Activated CD8-positive, alpha-beta memory T cell treated with anti-CD3 and anti-CD28 coated beads, Interleukin-2, amount 10 ng/mL, durations not matched to agents 7 days and 5 days (primary cell): ENCODE measurements at regions of chr4 and their contacts with region 1.

Region 1: GRCh38 chr4:75673027-75673958 is at the start of gene G3BP2:
- DNase-seq: peak; percentile 99
- ATAC-seq: peak; percentile 96
- H3K4me3 Mint-ChIP-seq: peak within 1 kb of the TSS; percentile 96
- H3K27ac Mint-ChIP-seq: peak within 1 kb of the TSS; percentile 96
- H3K4me1 Mint-ChIP-seq: peaks cover 41% of the 10 kb centered on the region
- H3K27me3 Mint-ChIP-seq: no peaks in the 10 kb centered on the region
- total RNA-seq, gene G3BP2: 148 to 230 TPM

Region 2: GRCh38 chr4:75653845-75654503 is 19.3 kb before region 1 on chr4:
- CTCF ChIA-PET with region 1: interaction called, 13 read pairs
- DNase-seq: no peak
- ATAC-seq: peak; percentile 16
- H3K4me3 Mint-ChIP-seq: peak overlapping the region; percentile 52
- H3K27ac Mint-ChIP-seq: peak overlapping the region; percentile 94
- H3K4me1 Mint-ChIP-seq: peaks cover 63% of the 10 kb centered on the region
- H3K27me3 Mint-ChIP-seq: no peaks in the 10 kb centered on the region

Region 3: GRCh38 chr4:75708218-75708691 is 35.0 kb after region 1 on chr4:
- CTCF ChIA-PET with region 1: interaction called, 14 read pairs
- DNase-seq: peak; percentile 62
- ATAC-seq: peak; percentile 89
- H3K4me3 Mint-ChIP-seq: no peak overlapping the region
- H3K27ac Mint-ChIP-seq: no peak overlapping the region
- H3K4me1 Mint-ChIP-seq: peaks cover 11% of the 10 kb centered on the region
- H3K27me3 Mint-ChIP-seq: no peaks in the 10 kb centered on the region

Region 4: DNA sequence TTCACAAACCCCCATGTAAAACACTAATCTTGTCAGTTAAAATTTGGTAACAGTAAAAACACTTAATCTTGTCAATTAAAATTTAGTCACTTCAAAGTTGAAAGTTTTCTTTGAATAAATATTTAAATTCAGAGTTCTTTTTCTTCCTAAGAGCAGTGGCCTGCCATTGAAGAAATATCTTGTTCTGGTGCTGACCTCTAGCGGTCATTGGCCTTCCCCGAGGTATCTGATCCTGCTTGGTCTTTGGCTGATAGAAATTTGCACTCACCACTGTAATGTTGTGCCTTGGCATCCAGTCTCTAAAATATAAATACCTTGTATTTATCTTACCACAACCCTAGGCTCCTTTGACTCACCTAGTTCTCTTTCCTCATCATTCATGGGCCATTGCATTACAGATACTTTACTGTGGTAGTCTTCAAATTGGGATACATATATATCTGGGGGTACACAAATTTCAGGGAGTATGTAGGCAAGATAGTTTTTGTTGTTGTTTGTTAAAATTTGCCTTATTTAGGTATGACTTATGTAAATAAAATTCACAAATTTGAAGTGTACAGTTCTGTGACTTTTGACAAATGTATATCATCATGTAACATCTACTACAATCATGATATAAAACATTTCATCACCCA is 394.5 kb after region 1 on chr4:
- CTCF ChIA-PET with region 1: no interaction called
- DNase-seq: peak; percentile 84
- ATAC-seq: peak; percentile 92
- H3K4me3 Mint-ChIP-seq: no peak overlapping the region
- H3K27ac Mint-ChIP-seq: no peak overlapping the region
- H3K4me1 Mint-ChIP-seq: peaks cover 5% of the 10 kb centered on the region
- H3K27me3 Mint-ChIP-seq: no peaks in the 10 kb centered on the region